Uterus (tissue), 4 donors: ENCODE measurements at regions of chr22 and their contacts with region 1.

Region 1: GRCh38 chr22:31080848-31081649 is at the start of gene SMTN:
- DNase-seq: peak; percentile 96
- H3K4me3 ChIP-seq: peak within 1 kb of the TSS; percentile 85 to 98
- H3K27ac ChIP-seq: peak within 1 kb of the TSS; percentile 96 to 98
- H3K4me1 ChIP-seq: peaks cover 0 to 7% of the 10 kb centered on the region in 2 donors
- H3K27me3 ChIP-seq: no peaks in the 10 kb centered on the region
- CTCF ChIP-seq: peak in 1 of 4 experiments; percentile 23
- POLR2A ChIP-seq: peak; percentile 100
- total RNA-seq, gene SMTN: 182 to 647 (median 274) TPM

Region 2: DNA sequence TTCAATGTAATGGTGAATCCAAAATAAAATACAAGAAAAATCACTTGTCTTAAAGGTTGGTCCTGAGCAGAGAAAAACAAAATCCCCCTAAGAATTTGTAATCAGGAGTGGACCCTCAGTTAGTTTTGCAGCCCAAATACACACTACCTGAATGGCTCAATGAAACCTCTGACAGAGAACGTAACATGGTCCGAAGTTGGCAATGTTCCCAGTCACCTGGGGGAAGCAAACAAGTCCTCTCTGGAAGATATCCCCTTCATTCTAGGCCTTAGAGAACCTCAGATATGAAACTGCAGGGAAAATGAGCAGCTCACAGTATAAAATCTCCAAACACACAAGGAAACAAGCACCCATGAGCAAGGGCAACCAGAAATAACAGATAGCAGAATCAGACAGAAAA is 170.7 kb before region 1 on chr22:
- intact Hi-C with region 1: no loop called
- DNase-seq: no peak
- H3K4me3 ChIP-seq: no peak overlapping the region
- H3K27ac ChIP-seq: no peak overlapping the region
- H3K4me1 ChIP-seq: no peaks in the 10 kb centered on the region
- H3K27me3 ChIP-seq: no peaks in the 10 kb centered on the region
- CTCF ChIP-seq: no peak
- POLR2A ChIP-seq: no peak

Region 3: GRCh38 chr22:30947816-30948454 is 133.1 kb before region 1 on chr22:
- intact Hi-C with region 1: loop called (anchors 2 kb)
- DNase-seq: no peak
- H3K4me3 ChIP-seq: no peak overlapping the region
- H3K27ac ChIP-seq: peak overlapping the region; percentile 62 to 80
- H3K4me1 ChIP-seq: no peaks in the 10 kb centered on the region
- H3K27me3 ChIP-seq: no peaks in the 10 kb centered on the region
- CTCF ChIP-seq: peak; percentile 66 to 92 (median 78)
- POLR2A ChIP-seq: peak in 1 of 2 donors; percentile 34

Region 4: DNA sequence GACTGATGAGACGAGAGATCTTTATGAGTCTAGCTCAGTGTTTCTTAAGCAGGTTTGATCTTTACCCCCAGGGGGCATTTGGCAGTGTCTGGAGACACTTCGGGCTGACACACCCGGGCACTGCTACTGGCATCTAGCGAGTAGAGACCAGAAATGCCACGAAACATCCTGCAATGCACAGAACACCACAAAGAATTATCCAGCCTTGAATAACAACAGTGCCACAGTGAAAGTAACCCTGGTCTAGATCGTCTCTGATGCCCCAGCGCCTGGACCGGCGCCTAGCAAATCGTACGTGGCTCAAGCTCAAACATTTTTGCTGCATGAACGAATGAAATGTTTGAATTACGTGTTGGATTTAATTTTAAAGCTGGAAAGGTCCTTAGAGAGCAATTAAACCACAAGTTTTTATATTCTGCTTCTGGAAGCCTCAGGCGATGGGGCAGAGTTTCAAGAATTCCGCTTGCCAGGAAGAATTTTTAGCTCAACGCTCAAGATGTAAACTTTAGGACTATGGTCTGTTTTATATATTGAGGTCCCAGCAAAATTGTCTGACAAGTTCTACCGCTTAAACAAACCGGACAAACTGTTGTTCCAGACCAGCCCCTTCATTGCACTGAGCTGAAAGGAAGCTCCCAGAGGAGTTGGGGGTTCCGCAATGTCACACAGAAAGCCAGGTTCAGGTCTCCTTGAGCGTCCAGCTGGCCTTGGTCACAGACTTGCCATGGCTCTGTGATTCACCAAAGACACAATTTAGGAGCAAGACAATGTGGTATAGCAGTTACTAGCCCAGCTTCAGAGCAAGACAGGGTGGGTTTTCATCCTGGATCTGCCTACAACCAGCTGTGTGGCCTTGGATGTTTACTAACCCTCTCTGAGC is 44.1 kb before region 1 on chr22:
- intact Hi-C with region 1: loop called (anchors 5 kb)
- DNase-seq: peak; percentile 73 to 77
- H3K4me3 ChIP-seq: peak overlapping the region in 1 of 2 donors; percentile 6
- H3K27ac ChIP-seq: peak overlapping the region; percentile 90 to 97
- H3K4me1 ChIP-seq: peaks cover 17 to 21% of the 10 kb centered on the region in 2 donors
- H3K27me3 ChIP-seq: no peaks in the 10 kb centered on the region
- CTCF ChIP-seq: peak in 1 of 4 experiments; percentile 21
- POLR2A ChIP-seq: peak; percentile 14 to 17

Region 5: GRCh38 chr22:31122532-31123291 is 41.7 kb after region 1 on chr22 and contains the start of gene INPP5J:
- intact Hi-C with region 1: no loop called
- DNase-seq: peak; percentile 58 to 67
- H3K4me3 ChIP-seq: peak within 1 kb of the TSS; percentile 30 to 40
- H3K27ac ChIP-seq: peak within 1 kb of the TSS; percentile 35 to 66
- H3K4me1 ChIP-seq: peaks cover 0 to 6% of the 10 kb centered on the region in 2 donors
- H3K27me3 ChIP-seq: no peaks in the 10 kb centered on the region
- CTCF ChIP-seq: no peak
- POLR2A ChIP-seq: no peak
- total RNA-seq, gene INPP5J: 0.59 to 7.9 (median 3.0) TPM